ENCODE measurements at regions of chr11 and their contacts with region 1.

Region 1: DNA sequence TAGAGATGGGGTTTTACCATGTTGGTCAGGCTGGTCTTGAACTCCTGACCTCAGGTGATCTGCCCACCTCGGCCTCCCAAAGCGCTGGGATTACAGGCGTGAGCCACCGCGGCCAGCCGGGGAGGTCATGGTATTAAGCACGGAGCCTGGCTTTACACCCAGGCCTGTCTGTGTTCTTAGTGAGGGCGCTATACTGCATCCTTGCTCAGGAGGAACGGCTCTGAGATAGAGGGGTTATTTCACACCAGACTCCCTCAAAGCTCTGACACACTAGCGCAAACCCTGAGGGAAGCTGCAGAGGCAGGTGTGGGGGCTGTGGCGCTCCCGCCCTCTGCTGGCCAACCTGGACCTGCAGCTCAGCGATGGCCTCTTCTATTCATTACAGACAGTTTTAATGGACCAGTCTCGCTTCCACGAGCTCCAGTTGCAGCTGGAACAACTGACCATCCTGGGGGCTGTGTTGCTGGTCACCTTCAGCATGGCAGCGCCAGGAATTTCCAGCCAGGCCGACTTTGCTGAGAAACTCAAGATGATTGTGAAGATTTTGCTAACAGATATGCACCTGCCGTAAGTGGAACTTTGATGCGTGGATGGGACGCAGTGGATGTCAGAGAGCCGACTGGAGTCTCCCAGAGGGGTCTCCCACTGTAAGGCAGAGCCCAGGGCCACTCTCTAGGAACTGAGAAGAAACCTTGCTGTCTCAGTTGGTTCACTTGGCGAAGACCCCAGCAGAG is 26.2 kb downstream of the TCP11L1 start:
- DNase-seq: peak; percentile 64
- ATAC-seq: peak; percentile 80
- H3K4me3 ChIP-seq: no peak overlapping the region
- H3K27ac ChIP-seq: no peak overlapping the region
- H3K4me1 ChIP-seq: peaks cover 7% of the 10 kb centered on the region; the same call in 1 of the 2 replicates
- H3K27me3 ChIP-seq: no peaks in the 10 kb centered on the region
- CTCF ChIP-seq: peak; percentile 91
- POLR2A ChIP-seq: no peak
- RAD21 ChIP-seq: peak; percentile 93

Region 2: DNA sequence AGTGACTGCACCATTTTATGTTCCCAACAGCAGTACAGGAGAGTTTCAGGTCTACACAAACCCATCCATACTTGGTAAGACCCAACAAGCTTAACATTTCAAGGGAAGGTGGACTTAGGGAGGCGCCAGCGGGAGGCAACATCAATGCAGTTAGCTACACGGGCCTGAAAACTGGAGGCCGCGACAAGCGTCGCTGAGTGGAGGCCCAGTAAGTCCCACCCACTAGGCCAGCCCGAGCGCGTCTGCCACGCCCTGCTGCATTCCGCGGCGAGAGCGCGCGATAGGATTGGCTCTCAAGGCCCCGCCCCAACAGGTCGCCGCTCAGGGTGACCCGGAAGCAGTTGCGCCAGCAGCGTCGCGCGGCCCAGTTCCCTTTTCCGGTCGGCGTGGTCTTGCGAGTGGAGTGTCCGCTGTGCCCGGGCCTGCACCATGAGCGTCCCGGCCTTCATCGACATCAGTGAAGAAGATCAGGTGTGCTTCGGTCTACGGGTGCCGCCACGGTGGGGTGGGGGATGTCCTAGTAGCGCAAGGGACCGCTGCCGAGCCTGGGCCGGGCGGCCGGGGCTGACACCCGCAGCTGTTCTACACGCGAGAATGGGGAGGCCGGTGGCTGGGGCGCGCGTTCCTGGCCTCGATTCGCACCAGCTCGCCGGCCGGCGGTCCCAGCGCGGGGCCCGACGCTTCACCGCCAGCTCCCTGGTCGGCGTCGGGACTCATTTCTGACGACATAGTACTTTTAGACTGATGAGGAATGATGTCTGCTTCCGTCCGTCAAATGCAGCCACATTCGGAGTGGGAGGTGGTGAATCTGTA is 481.9 kb before region 1 on chr11 and contains the start of gene EIF3M:
- CTCF ChIA-PET with region 1: no interaction called
- POLR2A ChIA-PET with region 1: no interaction called
- dilution Hi-C with region 1: no loop called
- in situ Hi-C with region 1: loop called (anchors 25 kb)
- intact Hi-C with region 1: no loop called
- DNase-seq: peak; percentile 94
- ATAC-seq: peak; percentile 99
- H3K4me3 ChIP-seq: peak within 1 kb of the TSS; percentile 75
- H3K27ac ChIP-seq: peak within 1 kb of the TSS; percentile 88
- H3K4me1 ChIP-seq: no peaks in the 10 kb centered on the region
- H3K27me3 ChIP-seq: no peaks in the 10 kb centered on the region
- CTCF ChIP-seq: no peak
- POLR2A ChIP-seq: peak; percentile 78
- RAD21 ChIP-seq: no peak
- total RNA-seq, gene EIF3M: 466 and 781 TPM in 2 replicates

Region 3: DNA sequence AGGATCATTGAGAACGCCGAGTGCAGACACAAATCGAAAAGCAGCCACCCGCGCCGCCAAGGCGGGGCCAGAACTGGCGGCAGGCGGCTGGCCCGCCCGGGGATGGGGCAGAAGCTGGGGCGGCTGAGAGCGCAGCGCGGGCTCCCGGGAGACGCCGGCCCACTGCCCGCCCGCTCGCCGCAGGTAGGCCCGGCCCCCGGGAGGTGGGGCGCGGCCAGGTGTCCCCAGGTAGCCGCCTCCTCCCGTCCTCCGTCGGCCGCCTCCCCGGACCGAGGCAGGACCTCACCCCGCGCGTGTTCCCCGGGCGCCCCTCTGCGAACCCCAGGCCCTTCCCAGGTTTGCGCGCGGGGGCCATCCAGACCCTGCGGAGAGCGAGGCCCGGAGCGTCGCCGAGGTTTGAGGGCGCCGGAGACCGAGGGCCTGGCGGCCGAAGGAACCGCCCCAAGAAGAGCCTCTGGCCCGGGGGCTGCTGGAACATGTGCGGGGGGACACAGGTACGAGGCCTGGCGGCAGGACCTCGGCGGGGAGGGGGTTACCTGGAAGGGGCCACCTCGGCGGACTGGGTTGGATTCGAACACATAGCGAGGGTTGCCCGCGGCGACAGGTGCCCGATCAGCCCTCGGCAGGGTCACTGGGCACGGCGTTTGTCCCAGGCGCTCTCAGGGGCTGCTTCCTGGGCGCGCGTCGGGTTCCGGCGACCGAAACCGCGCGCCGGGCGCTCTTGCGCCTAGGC is 235.8 kb before region 1 on chr11 and contains the start of gene PRRG4:
- CTCF ChIA-PET with region 1: no interaction called
- POLR2A ChIA-PET with region 1: no interaction called
- dilution Hi-C with region 1: no loop called
- in situ Hi-C with region 1: loop called (anchors 25 kb)
- intact Hi-C with region 1: no loop called
- DNase-seq: peak; percentile 16
- ATAC-seq: peak; percentile 88
- H3K4me3 ChIP-seq: peak within 1 kb of the TSS; percentile 92
- H3K27ac ChIP-seq: no peak within 1 kb of the TSS
- H3K4me1 ChIP-seq: peaks cover 4% of the 10 kb centered on the region; the same call in 1 of the 2 replicates
- H3K27me3 ChIP-seq: peaks cover 43% of the 10 kb centered on the region
- CTCF ChIP-seq: no peak
- POLR2A ChIP-seq: no peak
- RAD21 ChIP-seq: no peak
- total RNA-seq, gene PRRG4: not detected in 2 replicates

Region 4: GRCh38 chr11:32947978-32948377 is 117.6 kb before region 1 on chr11:
- CTCF ChIA-PET with region 1: interaction called, 11 read pairs
- POLR2A ChIA-PET with region 1: no interaction called
- dilution Hi-C with region 1: no loop called
- in situ Hi-C with region 1: no loop called
- intact Hi-C with region 1: no loop called
- DNase-seq: no peak
- ATAC-seq: no peak
- H3K4me3 ChIP-seq: no peak overlapping the region
- H3K27ac ChIP-seq: no peak overlapping the region
- H3K4me1 ChIP-seq: no peaks in the 10 kb centered on the region
- H3K27me3 ChIP-seq: no peaks in the 10 kb centered on the region
- CTCF ChIP-seq: no peak
- POLR2A ChIP-seq: no peak
- RAD21 ChIP-seq: no peak

Region 5: GRCh38 chr11:32968541-32968940 is 97.1 kb before region 1 on chr11:
- CTCF ChIA-PET with region 1: interaction called, 16 read pairs
- POLR2A ChIA-PET with region 1: no interaction called
- dilution Hi-C with region 1: no loop called
- in situ Hi-C with region 1: no loop called
- intact Hi-C with region 1: no loop called
- DNase-seq: no peak
- ATAC-seq: no peak
- H3K4me3 ChIP-seq: no peak overlapping the region
- H3K27ac ChIP-seq: no peak overlapping the region
- H3K4me1 ChIP-seq: no peaks in the 10 kb centered on the region
- H3K27me3 ChIP-seq: no peaks in the 10 kb centered on the region
- CTCF ChIP-seq: no peak
- POLR2A ChIP-seq: no peak
- RAD21 ChIP-seq: no peak

Region 6: DNA sequence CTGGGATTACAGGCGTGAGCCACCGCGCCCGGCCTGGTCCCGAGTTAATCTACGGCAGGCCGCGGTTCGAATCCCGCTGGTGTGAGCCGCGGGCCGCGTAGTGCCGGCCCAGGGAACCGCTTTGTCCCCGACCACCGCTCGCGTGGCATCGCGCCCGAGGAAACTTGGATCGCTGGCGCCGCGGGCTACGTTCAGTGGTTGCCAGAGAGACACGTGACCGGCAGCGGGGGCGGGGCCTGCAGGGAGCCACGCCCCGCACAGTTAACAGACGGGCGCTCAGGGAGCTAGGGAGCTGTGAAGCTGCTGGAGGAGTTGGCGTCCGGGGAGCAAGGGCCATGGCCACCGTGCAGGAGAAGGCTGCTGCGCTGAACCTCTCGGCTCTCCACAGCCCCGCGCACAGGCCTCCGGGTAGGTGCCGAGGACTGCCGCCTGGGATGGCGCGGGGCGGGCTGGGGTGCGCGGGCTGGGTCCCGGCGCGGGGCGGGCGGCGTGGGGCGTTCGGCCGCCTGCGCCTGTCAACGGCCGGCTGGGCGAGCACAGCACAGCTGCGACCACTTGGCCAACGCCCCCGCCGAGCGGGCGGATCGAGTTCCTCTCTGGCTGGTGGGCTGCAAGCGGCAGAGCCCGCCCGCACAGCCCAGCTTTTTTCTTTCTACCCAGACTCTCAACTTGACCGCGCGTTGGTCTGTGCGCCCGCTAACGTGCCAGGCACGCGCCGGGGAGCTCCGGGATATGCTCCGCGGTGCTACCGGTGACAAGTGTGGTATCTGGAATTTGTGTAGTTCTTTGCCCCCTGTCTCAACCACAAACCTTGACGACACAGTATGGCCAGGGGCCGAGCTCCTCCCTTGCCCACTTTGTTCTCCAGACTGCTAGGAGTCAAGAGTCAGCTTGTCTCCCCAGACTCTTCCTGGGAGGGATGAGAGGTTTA is 49.7 kb before region 1 on chr11 and contains the start of gene DEPDC7:
- CTCF ChIA-PET with region 1: no interaction called
- POLR2A ChIA-PET with region 1: no interaction called
- dilution Hi-C with region 1: no loop called
- in situ Hi-C with region 1: no loop called
- intact Hi-C with region 1: no loop called
- DNase-seq: peak; percentile 82
- ATAC-seq: peak; percentile 89
- H3K4me3 ChIP-seq: peak within 1 kb of the TSS; percentile 66
- H3K27ac ChIP-seq: peak within 1 kb of the TSS; percentile 26
- H3K4me1 ChIP-seq: peaks cover 11% of the 10 kb centered on the region
- H3K27me3 ChIP-seq: no peaks in the 10 kb centered on the region
- CTCF ChIP-seq: no peak
- POLR2A ChIP-seq: no peak
- RAD21 ChIP-seq: no peak
- total RNA-seq, gene DEPDC7: 9.7 TPM in 2 replicates

Measured in IMR-90 (cell line).